Mammary epithelial cell (primary cell): ENCODE measurements at regions of chr12 and their contacts with region 1.

Region 1: GRCh38 chr12:110698171-110698902 is 9.4 kb upstream of the HVCN1 start:
- DNase-seq: peak; percentile 76
- H3K4me3 ChIP-seq: no peak overlapping the region
- H3K27ac ChIP-seq: no peak overlapping the region
- H3K4me1 ChIP-seq: no peaks in the 10 kb centered on the region
- H3K27me3 ChIP-seq: no peaks in the 10 kb centered on the region
- CTCF ChIP-seq: peak; percentile 68 to 74

Region 2: GRCh38 chr12:110508071-110508586 is 190.2 kb before region 1 on chr12:
- CTCF ChIA-PET with region 1: no interaction called
- dilution Hi-C with region 1: no loop called
- in situ Hi-C with region 1: no loop called
- intact Hi-C with region 1: loop called (anchors 1 kb)
- DNase-seq: no peak
- H3K4me3 ChIP-seq: no peak overlapping the region
- H3K27ac ChIP-seq: no peak overlapping the region
- H3K4me1 ChIP-seq: no peaks in the 10 kb centered on the region
- H3K27me3 ChIP-seq: no peaks in the 10 kb centered on the region
- CTCF ChIP-seq: no peak

Region 3: GRCh38 chr12:110619534-110619953 is 78.8 kb before region 1 on chr12:
- CTCF ChIA-PET with region 1: no interaction called
- dilution Hi-C with region 1: no loop called
- in situ Hi-C with region 1: no loop called
- intact Hi-C with region 1: loop called (anchors 2 kb)
- DNase-seq: peak; percentile 49
- H3K4me3 ChIP-seq: no peak overlapping the region
- H3K27ac ChIP-seq: no peak overlapping the region
- H3K4me1 ChIP-seq: peaks cover 1% of the 10 kb centered on the region
- H3K27me3 ChIP-seq: no peaks in the 10 kb centered on the region
- CTCF ChIP-seq: no peak